AG04449 (cell line): ENCODE measurements at regions of chr20 and their contacts with region 1.

Region 1: DNA sequence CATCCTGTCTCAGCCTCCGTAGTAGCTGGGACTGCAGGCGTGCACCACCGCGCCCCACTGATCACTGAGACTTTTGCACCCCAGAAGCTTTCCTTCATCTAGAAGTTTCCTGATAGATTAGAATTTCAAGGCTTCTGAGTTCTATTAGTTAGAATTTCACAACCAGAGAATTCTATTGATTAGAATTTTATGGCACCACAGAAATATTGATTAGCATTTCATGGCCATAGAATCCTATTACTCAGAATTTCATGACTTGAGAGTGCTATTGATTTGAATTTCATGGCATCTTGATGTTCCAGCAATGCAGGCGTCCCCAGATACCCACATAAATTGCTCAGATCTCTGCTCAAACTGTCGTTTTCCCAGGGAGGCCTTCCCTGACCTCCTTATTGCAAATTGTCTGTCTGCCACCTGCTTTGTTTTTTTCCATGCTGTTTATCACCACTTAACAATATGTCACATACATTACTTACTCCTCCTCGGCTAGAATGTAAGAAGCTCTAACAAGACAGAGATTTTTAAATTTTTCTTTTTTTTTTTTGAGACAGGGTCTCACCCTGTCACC is 16.9 kb upstream of the CBFA2T2 start:
- DNase-seq: no peak
- H3K4me3 ChIP-seq: no peak overlapping the region
- CTCF ChIP-seq: no peak

Region 2: GRCh38 chr20:33460711-33461110 is 12.2 kb before region 1 on chr20:
- CTCF ChIA-PET with region 1: interaction called, 12 read pairs
- POLR2A ChIA-PET with region 1: no interaction called
- DNase-seq: no peak
- H3K4me3 ChIP-seq: no peak overlapping the region
- CTCF ChIP-seq: no peak

Region 3: DNA sequence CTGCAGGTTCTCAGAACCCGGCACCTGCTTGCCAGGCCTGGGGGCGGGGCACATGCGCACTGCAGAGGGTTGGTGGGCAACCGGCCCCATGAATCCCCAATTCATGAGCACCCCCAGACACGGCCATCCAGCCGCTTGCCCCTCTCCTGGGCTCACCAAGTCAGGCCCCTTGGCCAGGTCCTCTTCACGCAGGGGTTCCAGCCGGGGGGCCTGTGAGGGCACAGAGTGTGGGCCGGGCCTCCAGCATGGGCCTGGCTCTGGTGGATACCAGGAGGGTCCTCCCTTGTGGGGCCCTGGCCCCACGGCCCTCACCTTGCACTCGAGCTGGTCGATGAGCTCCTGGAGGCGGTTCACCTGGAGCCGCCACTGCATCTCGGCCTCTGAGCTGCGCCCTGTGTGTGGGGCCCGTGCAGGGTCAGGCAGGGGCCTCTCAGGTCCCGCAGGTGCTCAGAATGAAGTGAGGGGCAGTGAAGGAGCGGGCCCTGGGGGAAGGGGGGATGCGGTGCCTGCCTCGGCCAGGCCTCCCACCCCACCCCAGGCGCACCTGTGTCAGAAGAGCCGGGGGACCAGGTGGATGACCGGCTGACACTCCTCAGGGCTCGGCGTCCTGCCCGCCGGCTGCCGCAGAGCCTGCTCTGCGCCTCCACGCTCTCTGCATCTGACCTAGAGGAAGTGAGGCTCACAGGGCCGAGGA is 186.5 kb after region 1 on chr20:
- CTCF ChIA-PET with region 1: no interaction called
- POLR2A ChIA-PET with region 1: no interaction called
- DNase-seq: no peak
- H3K4me3 ChIP-seq: no peak overlapping the region
- CTCF ChIP-seq: no peak